IMR-90 (cell line): ENCODE measurements at regions of chr15 and their contacts with region 1.

Region 1: GRCh38 chr15:43851251-43851650 is 24.4 kb downstream of the WDR76 start:
- DNase-seq: no peak
- ATAC-seq: no peak
- H3K4me3 ChIP-seq: no peak overlapping the region
- H3K27ac ChIP-seq: no peak overlapping the region
- H3K4me1 ChIP-seq: no peaks in the 10 kb centered on the region
- H3K27me3 ChIP-seq: no peaks in the 10 kb centered on the region
- CTCF ChIP-seq: no peak
- POLR2A ChIP-seq: no peak
- RAD21 ChIP-seq: no peak

Region 2: DNA sequence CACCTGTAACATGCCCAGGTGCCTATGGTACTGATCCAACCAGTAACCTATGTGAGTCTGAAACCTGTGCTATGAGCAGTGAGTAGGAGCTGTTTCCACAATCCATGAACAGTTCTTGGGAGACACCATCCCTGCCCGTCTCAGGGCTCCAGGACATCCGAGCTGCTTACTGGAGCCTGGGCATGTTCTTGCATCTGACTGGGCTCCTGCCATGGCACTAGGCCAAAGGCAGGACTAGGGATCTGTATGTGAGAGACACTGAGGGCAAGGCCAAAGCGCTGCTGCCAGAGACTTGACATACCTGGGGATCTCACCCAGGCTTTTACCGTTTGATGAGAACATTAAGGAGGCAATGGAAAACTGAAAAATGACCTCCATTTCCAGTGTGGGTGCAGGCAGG is 35.3 kb after region 1 on chr15:
- CTCF ChIA-PET with region 1: no interaction called
- POLR2A ChIA-PET with region 1: no interaction called
- dilution Hi-C with region 1: no loop called
- in situ Hi-C with region 1: no loop called
- intact Hi-C with region 1: no loop called
- DNase-seq: no peak
- ATAC-seq: no peak
- H3K4me3 ChIP-seq: no peak overlapping the region
- H3K27ac ChIP-seq: no peak overlapping the region
- H3K4me1 ChIP-seq: no peaks in the 10 kb centered on the region
- H3K27me3 ChIP-seq: no peaks in the 10 kb centered on the region
- CTCF ChIP-seq: no peak
- POLR2A ChIP-seq: no peak
- RAD21 ChIP-seq: no peak

Region 3: DNA sequence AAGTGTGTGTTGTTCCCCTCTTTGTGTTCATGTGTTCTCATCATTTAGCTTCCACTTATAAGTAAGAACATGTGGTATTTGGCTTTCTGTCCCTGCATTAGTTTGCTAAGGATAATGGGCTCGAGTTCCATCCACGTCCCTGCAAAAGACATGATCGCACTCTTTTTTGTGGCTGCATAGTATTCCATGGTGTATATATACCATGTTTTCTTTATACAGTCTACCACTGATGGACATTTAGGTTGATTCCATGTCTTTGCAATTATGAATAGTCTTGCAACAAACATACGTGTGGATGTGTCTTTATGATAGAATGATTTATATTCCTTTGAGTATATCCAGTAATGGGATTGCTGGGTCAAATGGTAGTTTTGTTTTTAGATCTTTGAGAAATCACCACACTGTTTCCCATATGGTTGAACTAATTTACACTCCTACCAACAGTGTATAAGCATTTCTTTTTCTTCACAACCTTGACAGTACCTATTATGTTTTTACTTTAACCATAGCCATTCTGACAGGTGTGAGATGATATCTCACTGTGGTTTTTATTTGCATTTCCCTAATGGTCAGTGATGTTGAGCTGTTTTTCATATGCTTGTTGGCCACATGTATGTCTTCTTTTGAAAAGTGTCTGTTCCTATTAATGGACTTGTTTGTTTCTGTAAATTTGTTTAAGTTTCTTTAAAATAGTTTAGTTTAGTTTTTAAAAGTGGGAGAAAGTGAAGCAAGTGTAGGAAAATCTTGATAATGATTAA is 1693.2 kb after region 1 on chr15:
- CTCF ChIA-PET with region 1: no interaction called
- POLR2A ChIA-PET with region 1: interaction called, 11 read pairs
- dilution Hi-C with region 1: no loop called
- in situ Hi-C with region 1: no loop called
- intact Hi-C with region 1: no loop called
- DNase-seq: no peak
- ATAC-seq: no peak
- H3K4me3 ChIP-seq: no peak overlapping the region
- H3K27ac ChIP-seq: no peak overlapping the region
- H3K4me1 ChIP-seq: no peaks in the 10 kb centered on the region
- H3K27me3 ChIP-seq: no peaks in the 10 kb centered on the region
- CTCF ChIP-seq: no peak
- POLR2A ChIP-seq: no peak
- RAD21 ChIP-seq: no peak